ENCODE measurements at regions of chr13 and their contacts with region 1.

Region 1: GRCh38 chr13:27171827-27172494 is 350 bp upstream of the USP12 start:
- DNase-seq: peak; percentile 92
- H3K4me3 Mint-ChIP-seq: peak overlapping the region; percentile 75
- H3K27ac Mint-ChIP-seq: peak overlapping the region; percentile 77
- H3K4me1 Mint-ChIP-seq: peaks cover 54% of the 10 kb centered on the region
- H3K27me3 Mint-ChIP-seq: no peaks in the 10 kb centered on the region

Region 2: GRCh38 chr13:25901460-25902376 is 1270.2 kb before region 1 on chr13:
- CTCF ChIA-PET with region 1: no interaction called
- POLR2A ChIA-PET with region 1: no interaction called
- intact Hi-C with region 1: loop called (anchors 10 kb)
- DNase-seq: peak; percentile 44
- H3K4me3 Mint-ChIP-seq: peak overlapping the region; percentile 6
- H3K27ac Mint-ChIP-seq: no peak overlapping the region
- H3K4me1 Mint-ChIP-seq: peaks cover 26% of the 10 kb centered on the region
- H3K27me3 Mint-ChIP-seq: peaks cover 9% of the 10 kb centered on the region

Region 3: GRCh38 chr13:27194895-27195764 is 23.2 kb after region 1 on chr13:
- CTCF ChIA-PET with region 1: no interaction called
- POLR2A ChIA-PET with region 1: no interaction called
- intact Hi-C with region 1: loop called (anchors 2 kb)
- DNase-seq: peak; percentile 22
- H3K4me3 Mint-ChIP-seq: no peak overlapping the region
- H3K27ac Mint-ChIP-seq: no peak overlapping the region
- H3K4me1 Mint-ChIP-seq: peaks cover 19% of the 10 kb centered on the region
- H3K27me3 Mint-ChIP-seq: peaks cover 22% of the 10 kb centered on the region

Region 4: GRCh38 chr13:27242706-27243105 is 70.7 kb after region 1 on chr13:
- CTCF ChIA-PET with region 1: no interaction called
- POLR2A ChIA-PET with region 1: no interaction called
- intact Hi-C with region 1: no loop called
- DNase-seq: no peak
- H3K4me3 Mint-ChIP-seq: no peak overlapping the region
- H3K27ac Mint-ChIP-seq: no peak overlapping the region
- H3K4me1 Mint-ChIP-seq: peaks cover 3% of the 10 kb centered on the region
- H3K27me3 Mint-ChIP-seq: no peaks in the 10 kb centered on the region

Region 5: GRCh38 chr13:27259831-27260230 is 87.9 kb after region 1 on chr13:
- CTCF ChIA-PET with region 1: no interaction called
- POLR2A ChIA-PET with region 1: interaction called, 12 read pairs
- intact Hi-C with region 1: no loop called
- DNase-seq: no peak
- H3K4me3 Mint-ChIP-seq: no peak overlapping the region
- H3K27ac Mint-ChIP-seq: peak overlapping the region; percentile 81
- H3K4me1 Mint-ChIP-seq: peaks cover 64% of the 10 kb centered on the region
- H3K27me3 Mint-ChIP-seq: no peaks in the 10 kb centered on the region

Region 6: DNA sequence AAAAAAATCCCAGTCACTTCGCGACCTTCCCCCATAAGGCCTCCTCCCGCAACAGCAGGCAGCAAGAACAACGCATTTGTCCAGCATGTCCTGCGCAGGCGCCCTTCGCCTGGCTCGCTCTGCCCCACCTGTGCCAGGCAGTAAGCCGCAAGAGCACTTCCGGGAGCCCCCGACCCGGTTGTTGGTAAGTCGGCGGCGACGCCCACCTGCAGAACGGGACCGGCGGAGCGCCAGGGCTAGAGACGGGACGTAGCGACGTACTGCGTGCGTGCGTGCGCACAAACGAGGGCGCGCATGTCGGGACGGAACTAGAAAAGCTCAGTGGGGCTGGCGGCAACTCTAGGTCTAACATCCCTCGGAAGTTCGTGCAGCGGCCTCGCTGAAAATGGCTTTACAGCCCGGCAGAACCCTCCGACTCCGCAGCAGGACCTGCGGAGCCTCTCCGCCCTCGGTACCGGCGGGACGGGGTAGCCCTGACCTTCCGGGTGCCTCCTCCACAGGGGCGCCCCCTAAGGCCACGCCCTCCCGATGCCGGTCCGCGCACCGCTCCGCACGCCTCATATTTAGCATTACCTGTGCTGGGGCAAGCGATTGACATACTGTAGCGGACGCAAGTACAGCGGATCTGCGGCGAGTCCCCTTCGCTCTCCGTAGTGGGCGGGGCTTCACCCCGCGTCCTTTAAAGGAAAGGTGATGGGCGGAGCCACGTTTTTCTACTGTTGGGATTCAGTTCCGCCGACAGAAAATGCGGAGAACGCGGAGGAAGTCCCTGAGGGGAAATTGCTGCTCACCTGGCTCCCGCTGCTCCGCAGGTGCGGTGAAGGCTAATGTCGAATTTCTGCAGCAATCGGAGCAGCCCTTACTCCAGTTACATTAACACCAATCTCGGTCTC is 278.2 kb after region 1 on chr13 and contains the start of gene MTIF3:
- CTCF ChIA-PET with region 1: no interaction called
- POLR2A ChIA-PET with region 1: no interaction called
- intact Hi-C with region 1: loop called (anchors 1 kb)
- DNase-seq: peak; percentile 97
- H3K4me3 Mint-ChIP-seq: peak within 1 kb of the TSS; percentile 90
- H3K27ac Mint-ChIP-seq: peak within 1 kb of the TSS; percentile 95
- H3K4me1 Mint-ChIP-seq: peaks cover 57% of the 10 kb centered on the region
- H3K27me3 Mint-ChIP-seq: no peaks in the 10 kb centered on the region
- total RNA-seq, gene MTIF3: 35.7 to 37.3 TPM

Region 7: DNA sequence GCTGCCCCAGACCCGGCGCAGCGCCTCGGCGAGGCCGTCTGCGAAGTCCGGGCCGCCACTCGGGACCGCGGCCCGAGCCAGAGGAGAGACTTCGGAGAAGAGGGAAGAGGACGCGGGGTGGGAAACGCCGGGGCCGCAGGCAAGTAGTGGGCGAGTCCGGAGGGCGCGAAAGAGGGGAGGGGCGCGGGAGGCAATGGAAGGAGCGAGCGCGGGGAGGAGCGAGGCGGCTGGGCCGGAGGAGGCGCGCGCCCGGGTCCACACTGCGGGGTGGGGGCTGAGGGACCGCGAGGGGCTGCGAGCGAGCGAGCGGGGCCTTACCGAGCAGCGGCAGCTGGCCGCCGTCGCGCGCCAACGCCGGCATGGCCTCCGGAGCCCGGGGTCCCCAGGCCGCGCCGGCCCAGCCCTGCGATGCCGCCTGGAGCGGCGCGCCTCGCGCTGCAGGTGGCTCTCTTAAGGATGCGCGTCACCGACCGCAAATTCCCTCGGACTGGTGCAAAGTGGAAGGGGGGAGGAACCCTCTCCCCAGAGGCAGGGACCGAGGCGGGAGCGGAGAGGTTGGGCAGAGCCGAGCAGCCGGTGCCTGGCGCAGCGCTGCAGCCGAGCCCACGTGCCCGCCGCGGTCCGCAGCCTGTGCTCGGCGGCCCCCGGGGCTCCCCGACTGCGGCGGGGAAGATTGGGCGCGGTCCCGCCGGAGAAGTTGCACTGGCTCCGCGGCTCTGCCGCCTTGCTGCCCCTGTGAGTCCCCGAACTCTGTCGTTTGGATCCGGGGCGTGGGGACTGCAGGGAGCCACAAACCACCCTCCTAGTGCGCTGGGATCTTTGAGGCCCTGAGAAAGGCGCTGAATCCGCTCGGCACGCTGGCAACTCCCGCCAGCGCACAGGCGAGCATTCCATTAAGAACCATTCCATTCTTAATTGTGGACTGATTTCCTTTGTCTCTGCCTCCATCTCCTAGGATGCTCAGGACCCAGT is 928.5 kb after region 1 on chr13 and contains the start of gene FLT3:
- CTCF ChIA-PET with region 1: no interaction called
- POLR2A ChIA-PET with region 1: no interaction called
- intact Hi-C with region 1: no loop called
- DNase-seq: peak; percentile 54
- H3K4me3 Mint-ChIP-seq: peak within 1 kb of the TSS; percentile 37
- H3K27ac Mint-ChIP-seq: no peak within 1 kb of the TSS
- H3K4me1 Mint-ChIP-seq: peaks cover 9% of the 10 kb centered on the region
- H3K27me3 Mint-ChIP-seq: peaks cover 49% of the 10 kb centered on the region
- total RNA-seq, gene FLT3: not detected